Tibial artery (tissue), 4 donors: ENCODE measurements at regions of chr5 and their contacts with region 1.

Region 1: DNA sequence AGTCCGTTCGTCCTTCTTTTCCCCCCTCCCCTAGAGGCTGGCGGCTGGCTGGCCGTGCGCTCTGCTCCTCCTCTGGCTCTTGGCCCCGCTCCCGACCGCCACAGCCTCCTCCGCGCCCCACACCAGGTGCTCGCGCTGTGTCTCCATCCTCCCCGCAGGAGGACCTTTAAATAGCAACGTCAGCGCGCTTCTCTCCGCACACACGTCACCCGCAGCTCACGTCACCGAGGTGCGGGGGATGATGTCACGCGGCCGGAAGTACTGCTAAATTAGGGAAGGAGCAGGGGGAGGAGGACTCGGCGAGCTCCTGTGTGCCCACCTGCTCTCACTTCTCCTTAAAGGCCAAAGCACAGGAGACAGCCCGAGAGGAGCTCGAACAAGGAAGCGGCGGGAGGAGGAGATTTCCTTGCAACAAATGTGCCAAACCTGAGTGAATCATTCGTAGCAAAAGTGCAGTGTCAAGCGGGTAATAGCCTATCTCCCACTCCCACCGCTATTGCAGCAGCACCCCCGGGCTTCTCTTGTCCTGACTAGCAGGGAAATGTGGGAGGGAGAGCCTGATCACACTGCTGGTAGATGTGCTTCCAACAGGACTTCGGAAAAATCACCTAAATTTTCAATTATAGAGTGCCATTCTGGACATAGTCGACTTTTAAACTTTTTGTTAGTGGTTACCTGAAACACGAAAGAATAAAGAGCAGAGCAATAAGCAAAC is 614 bp upstream of the HOMER1 start:
- DNase-seq: peak; percentile 89 to 94
- H3K4me3 ChIP-seq: peak overlapping the region; percentile 89 to 97
- H3K27ac ChIP-seq: peak overlapping the region; percentile 90 to 98
- H3K4me1 ChIP-seq: peaks cover 0 to 15% (median 7%) of the 10 kb centered on the region in 4 donors
- H3K27me3 ChIP-seq: no peaks in the 10 kb centered on the region
- CTCF ChIP-seq: no peak

Region 2: DNA sequence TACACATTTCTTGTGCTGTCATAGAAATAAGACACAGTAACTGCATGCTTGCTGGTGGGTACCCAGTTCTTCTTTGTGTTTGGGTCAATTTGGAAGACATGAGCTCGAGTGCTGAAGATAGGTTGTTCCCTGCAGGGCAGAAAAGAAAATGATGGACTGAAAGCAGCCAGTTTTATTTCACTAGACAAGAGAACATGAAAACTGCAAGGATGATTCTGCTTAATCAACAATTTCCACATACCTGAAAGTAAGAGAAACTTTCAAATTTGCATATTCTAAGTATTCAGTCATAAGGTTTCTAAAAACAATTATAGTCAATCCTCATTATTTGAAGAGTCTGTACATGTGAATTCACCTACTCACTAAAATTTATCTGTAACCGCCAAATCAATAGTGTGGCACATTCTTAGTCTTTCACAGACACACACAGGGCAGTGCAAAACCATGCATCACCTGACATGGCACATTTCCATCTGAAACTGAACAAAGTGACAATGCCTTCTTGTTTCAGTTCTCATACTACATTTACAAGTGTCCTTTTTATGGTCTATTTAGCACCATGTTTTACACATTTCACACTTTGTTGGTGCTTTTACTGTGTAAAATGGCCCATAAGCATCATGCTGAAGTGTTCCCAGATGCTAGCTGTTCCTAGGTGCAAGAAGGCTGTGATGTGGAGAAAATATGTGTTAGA is 57.5 kb before region 1 on chr5:
- intact Hi-C with region 1: no loop called
- DNase-seq: no peak
- H3K4me3 ChIP-seq: no peak overlapping the region
- H3K27ac ChIP-seq: no peak overlapping the region
- H3K4me1 ChIP-seq: no peaks in the 10 kb centered on the region
- H3K27me3 ChIP-seq: no peaks in the 10 kb centered on the region
- CTCF ChIP-seq: no peak

Region 3: GRCh38 chr5:79612667-79613198 is 98.2 kb after region 1 on chr5:
- intact Hi-C with region 1: loop called (anchors 5 kb)
- DNase-seq: no peak
- H3K4me3 ChIP-seq: peak overlapping the region; percentile 89 to 99
- H3K27ac ChIP-seq: peak overlapping the region; percentile 92 to 98
- H3K4me1 ChIP-seq: peaks cover 0 to 24% (median 17%) of the 10 kb centered on the region in 4 donors
- H3K27me3 ChIP-seq: no peaks in the 10 kb centered on the region
- CTCF ChIP-seq: no peak